CD4-positive, alpha-beta T cell (primary cell): ENCODE measurements at regions of chr10 and their contacts with region 1.

Region 1: DNA sequence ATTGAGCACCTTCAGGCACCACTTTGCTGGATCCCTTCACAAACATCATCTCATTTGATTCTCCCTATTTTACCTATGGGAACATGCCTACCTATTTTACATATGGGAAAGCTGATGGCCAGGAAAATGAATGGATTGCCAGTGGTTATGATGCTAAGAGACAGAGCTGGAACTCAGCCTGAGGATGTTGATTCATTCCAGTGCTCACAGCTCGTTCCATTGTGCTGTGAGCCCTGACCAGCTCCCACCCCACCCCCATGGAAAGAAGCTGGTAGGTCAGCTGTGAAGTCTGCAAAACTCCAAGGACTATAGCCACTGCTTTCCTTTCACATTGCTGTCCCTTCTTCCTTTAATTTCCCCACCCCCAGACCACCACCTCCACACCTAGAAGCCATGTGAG is 9.6 kb downstream of the UBTD1 start:
- DNase-seq: no peak
- ATAC-seq: no peak
- H3K4me3 ChIP-seq: no peak overlapping the region
- H3K4me3 Mint-ChIP-seq: no peak overlapping the region
- H3K27ac ChIP-seq: no peak overlapping the region
- H3K27ac Mint-ChIP-seq: no peak overlapping the region
- H3K4me1 ChIP-seq: no peaks in the 10 kb centered on the region
- H3K4me1 Mint-ChIP-seq: no peaks in the 10 kb centered on the region
- H3K27me3 ChIP-seq: peaks cover 0 to 11% of the 10 kb centered on the region in 2 experiments
- H3K27me3 Mint-ChIP-seq: peaks cover 7% of the 10 kb centered on the region
- CTCF ChIP-seq: no peak

Region 2: DNA sequence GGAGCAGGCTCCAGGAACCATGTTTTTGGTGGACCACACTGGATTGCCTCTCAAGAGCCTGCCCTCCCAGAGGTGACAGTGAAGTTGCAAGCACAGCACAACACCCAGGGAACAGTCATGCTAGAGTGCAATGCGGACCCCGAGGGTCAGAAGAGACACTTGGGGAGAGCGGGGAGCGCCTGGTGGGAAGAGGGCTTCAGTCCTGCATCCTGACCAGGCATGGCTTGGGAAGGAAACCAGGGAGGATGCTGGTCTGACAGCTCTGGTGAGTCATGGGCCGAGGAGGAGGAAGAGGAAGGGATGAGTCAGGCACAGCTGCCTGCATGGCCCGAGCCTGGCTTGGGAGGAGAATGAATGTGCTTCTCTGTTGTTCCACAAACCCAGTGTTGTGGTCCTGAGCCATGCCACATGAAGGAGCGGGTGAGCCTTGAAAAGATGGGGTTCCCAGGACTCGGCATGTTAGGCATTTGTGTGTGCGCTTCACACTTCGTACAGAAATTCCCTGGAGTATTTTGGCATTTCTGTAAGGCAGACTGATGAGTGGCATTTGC is 34.8 kb after region 1 on chr10:
- CTCF ChIA-PET with region 1: no interaction called
- POLR2A ChIA-PET with region 1: no interaction called
- intact Hi-C with region 1: loop called in 1 of 2 experiments (anchors 5 kb)
- DNase-seq: peak in 3 of 14 experiments; percentile 49 to 72 (median 63)
- ATAC-seq: no peak
- H3K4me3 ChIP-seq: no peak overlapping the region
- H3K4me3 Mint-ChIP-seq: no peak overlapping the region
- H3K27ac ChIP-seq: no peak overlapping the region
- H3K27ac Mint-ChIP-seq: no peak overlapping the region
- H3K4me1 ChIP-seq: peaks cover 10% of the 10 kb centered on the region
- H3K4me1 Mint-ChIP-seq: no peaks in the 10 kb centered on the region
- H3K27me3 ChIP-seq: no peaks in the 10 kb centered on the region
- H3K27me3 Mint-ChIP-seq: no peaks in the 10 kb centered on the region
- CTCF ChIP-seq: no peak